Naive thymus-derived CD8-positive, alpha-beta T cell (primary cell): ENCODE measurements at regions of chr6 and their contacts with region 1.

Region 1: GRCh38 chr6:30616811-30617564 is at the start of gene PPP1R10:
- DNase-seq: peak; percentile 83 to 100 (median 99)
- ATAC-seq: peak; percentile 70 to 77
- H3K4me3 Mint-ChIP-seq: peak within 1 kb of the TSS; percentile 92 to 100 (median 99)
- H3K27ac Mint-ChIP-seq: peak within 1 kb of the TSS; percentile 99 to 100 (median 100)
- H3K4me1 Mint-ChIP-seq: peaks cover 18 to 61% (median 48%) of the 10 kb centered on the region in 4 donors
- H3K27me3 Mint-ChIP-seq: peaks cover 0 to 8% (median 0%) of the 10 kb centered on the region in 5 donors
- polyA plus RNA-seq, gene PPP1R10: 16.9 to 20.2 (median 19.8) TPM

Region 2: DNA sequence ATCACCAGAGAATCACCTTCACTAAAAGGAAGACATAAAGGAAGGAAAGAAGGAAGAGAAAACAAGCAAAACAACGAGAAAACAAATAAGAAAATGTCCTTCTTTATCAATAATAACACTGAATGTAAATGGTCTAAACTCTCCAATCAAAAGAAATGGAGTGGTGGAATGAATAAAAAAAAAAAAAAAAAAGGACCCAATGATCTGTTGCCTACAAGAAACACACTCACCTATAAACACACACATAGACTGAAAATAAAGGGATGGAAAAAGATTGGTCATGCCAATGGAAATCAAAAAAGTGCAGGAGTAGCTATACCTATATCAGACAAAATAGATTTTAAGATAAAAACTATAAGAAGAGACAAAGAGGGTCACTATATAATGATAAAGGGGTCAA is 157.8 kb before region 1 on chr6:
- POLR2A ChIA-PET with region 1: no interaction called
- DNase-seq: no peak
- ATAC-seq: no peak
- H3K4me3 Mint-ChIP-seq: no peak overlapping the region
- H3K27ac Mint-ChIP-seq: no peak overlapping the region
- H3K4me1 Mint-ChIP-seq: peaks cover 13 to 35% (median 22%) of the 10 kb centered on the region in 4 donors
- H3K27me3 Mint-ChIP-seq: peaks cover 67 to 94% (median 80%) of the 10 kb centered on the region in 5 donors

Region 3: GRCh38 chr6:30515932-30516753 is 100.8 kb before region 1 on chr6:
- POLR2A ChIA-PET with region 1: interaction called, 18 read pairs
- DNase-seq: peak; percentile 71 to 97 (median 91)
- ATAC-seq: peak; percentile 84 to 85
- H3K4me3 Mint-ChIP-seq: peak overlapping the region; percentile 70 to 94 (median 90)
- H3K27ac Mint-ChIP-seq: peak overlapping the region; percentile 96 to 100 (median 99)
- H3K4me1 Mint-ChIP-seq: peaks cover 18 to 80% (median 66%) of the 10 kb centered on the region in 4 donors
- H3K27me3 Mint-ChIP-seq: no peaks in the 10 kb centered on the region

Region 4: GRCh38 chr6:30571075-30571768 is 45.8 kb before region 1 on chr6 and contains the start of gene ABCF1:
- POLR2A ChIA-PET with region 1: interaction called, 39 read pairs
- DNase-seq: peak; percentile 98 to 100 (median 99)
- ATAC-seq: peak; percentile 94
- H3K4me3 Mint-ChIP-seq: peak within 1 kb of the TSS; percentile 91 to 100 (median 100)
- H3K27ac Mint-ChIP-seq: peak within 1 kb of the TSS; percentile 98 to 100 (median 99)
- H3K4me1 Mint-ChIP-seq: peaks cover 45 to 67% (median 62%) of the 10 kb centered on the region in 4 donors
- H3K27me3 Mint-ChIP-seq: no peaks in the 10 kb centered on the region
- polyA plus RNA-seq, gene ABCF1: 19.1 to 43.1 (median 30.5) TPM

Region 5: GRCh38 chr6:30646458-30647241 is 29.7 kb after region 1 on chr6 and contains the start of gene C6orf136:
- POLR2A ChIA-PET with region 1: interaction called, 15 read pairs
- DNase-seq: peak in 9 of 10 donors; percentile 88 to 96 (median 93)
- ATAC-seq: peak; percentile 79 to 80
- H3K4me3 Mint-ChIP-seq: peak within 1 kb of the TSS; percentile 80 to 93 (median 87)
- H3K27ac Mint-ChIP-seq: peak within 1 kb of the TSS; percentile 71 to 96 (median 93)
- H3K4me1 Mint-ChIP-seq: peaks cover 25 to 48% (median 33%) of the 10 kb centered on the region in 4 donors
- H3K27me3 Mint-ChIP-seq: no peaks in the 10 kb centered on the region
- polyA plus RNA-seq, gene C6orf136: 5.6 to 23.2 (median 13.7) TPM

Region 6: GRCh38 chr6:30717042-30717844 is 100.3 kb after region 1 on chr6 and contains the start of gene MDC1:
- POLR2A ChIA-PET with region 1: interaction called, 42 read pairs
- DNase-seq: peak; percentile 91 to 100 (median 98)
- ATAC-seq: peak; percentile 75 to 80
- H3K4me3 Mint-ChIP-seq: peak within 1 kb of the TSS; percentile 87 to 99 (median 97)
- H3K27ac Mint-ChIP-seq: peak within 1 kb of the TSS; percentile 97 to 100 (median 99)
- H3K4me1 Mint-ChIP-seq: peaks cover 34 to 59% (median 57%) of the 10 kb centered on the region in 4 donors
- H3K27me3 Mint-ChIP-seq: no peaks in the 10 kb centered on the region
- polyA plus RNA-seq, gene MDC1: 1.3 to 6.3 (median 2.8) TPM

Region 7: DNA sequence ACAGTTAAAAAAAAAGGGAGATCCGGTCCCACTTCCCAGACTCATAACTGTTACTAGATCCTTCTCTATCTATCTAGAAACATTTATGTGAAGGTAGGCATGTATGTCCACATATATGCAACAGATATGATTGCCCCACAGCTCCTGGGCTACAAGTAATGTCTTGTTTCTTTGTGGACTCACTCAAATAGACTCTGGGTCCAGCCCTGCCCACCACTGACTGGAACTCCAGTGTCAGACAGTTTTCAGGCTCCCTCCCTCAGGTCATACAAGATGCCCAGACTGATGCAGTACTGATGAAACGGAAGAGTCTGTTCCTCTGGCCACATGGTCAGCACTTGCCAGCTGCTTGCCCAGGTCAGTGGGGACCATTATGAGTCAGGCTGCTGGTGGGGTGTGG is 158.1 kb after region 1 on chr6:
- POLR2A ChIA-PET with region 1: no interaction called
- DNase-seq: no peak
- ATAC-seq: no peak
- H3K4me3 Mint-ChIP-seq: no peak overlapping the region
- H3K27ac Mint-ChIP-seq: peak overlapping the region in 2 of 10 donors; percentile 62 to 65
- H3K4me1 Mint-ChIP-seq: peaks cover 19 to 41% (median 34%) of the 10 kb centered on the region in 4 donors
- H3K27me3 Mint-ChIP-seq: no peaks in the 10 kb centered on the region

Region 8: DNA sequence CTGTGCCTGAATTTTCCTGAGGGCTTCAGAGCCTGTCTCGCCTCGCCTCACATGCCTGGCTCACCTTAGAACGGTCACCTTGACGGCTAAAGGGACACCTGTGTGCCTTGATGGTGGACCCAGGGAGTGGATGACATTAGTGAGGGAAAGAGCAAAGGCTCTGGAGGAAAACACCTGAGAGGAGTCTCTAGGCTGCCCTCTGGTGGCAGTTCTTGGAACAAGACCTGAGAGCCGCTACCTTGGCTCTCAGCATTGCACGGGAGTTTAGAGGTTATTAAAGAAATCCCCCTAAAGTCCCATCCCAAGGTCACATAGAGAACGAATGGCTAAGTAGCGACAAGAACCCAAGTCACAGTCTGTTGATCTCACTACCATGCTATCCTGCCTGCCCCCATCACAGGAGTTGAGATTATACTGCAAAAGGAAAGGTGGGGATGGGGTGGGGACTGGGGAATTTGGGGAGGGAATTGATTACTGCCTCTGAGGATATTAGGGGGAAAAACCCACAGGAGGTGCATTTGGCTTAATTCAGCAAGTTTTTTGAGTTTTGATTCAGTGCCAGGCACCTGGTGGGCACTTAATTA is 511.2 kb after region 1 on chr6:
- POLR2A ChIA-PET with region 1: no interaction called
- DNase-seq: peak; percentile 38 to 81 (median 70)
- ATAC-seq: peak; percentile 79 to 86
- H3K4me3 Mint-ChIP-seq: no peak overlapping the region
- H3K27ac Mint-ChIP-seq: peak overlapping the region in 5 of 10 donors; percentile 1 to 77 (median 44)
- H3K4me1 Mint-ChIP-seq: peaks cover 5 to 10% (median 7%) of the 10 kb centered on the region in 4 donors
- H3K27me3 Mint-ChIP-seq: peaks cover 0 to 5% (median 1%) of the 10 kb centered on the region in 5 donors

Region 9: DNA sequence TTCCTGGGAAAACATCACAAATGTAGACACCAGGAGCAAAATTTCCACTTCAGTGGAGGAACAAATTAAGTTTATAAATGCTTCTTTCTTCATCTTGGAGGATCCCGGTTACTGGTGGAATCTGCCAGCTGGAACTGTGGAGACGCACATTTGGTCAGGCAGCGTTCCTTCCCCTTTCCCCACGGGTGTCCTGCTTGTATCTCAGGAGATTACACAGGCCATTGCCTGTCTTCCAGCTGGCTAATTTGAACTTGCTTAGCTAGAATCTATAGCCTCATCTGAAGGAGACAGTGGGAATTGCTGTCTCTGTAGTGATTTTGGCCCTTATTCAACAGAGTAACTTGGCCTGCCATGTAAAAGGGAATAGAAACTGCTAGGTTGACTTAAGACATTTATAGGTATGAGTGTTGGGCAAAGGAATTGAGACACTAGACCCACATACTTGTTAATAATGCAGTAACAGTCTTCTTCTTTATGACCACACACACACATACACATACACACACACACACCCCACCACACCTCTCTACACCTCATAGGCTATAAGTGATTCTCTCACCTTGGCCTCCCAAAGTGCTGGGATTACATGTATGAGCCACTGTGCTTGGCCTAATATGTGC is 1720.3 kb after region 1 on chr6:
- POLR2A ChIA-PET with region 1: no interaction called
- DNase-seq: no peak
- ATAC-seq: no peak
- H3K4me3 Mint-ChIP-seq: no peak overlapping the region
- H3K27ac Mint-ChIP-seq: no peak overlapping the region
- H3K4me1 Mint-ChIP-seq: no peaks in the 10 kb centered on the region
- H3K27me3 Mint-ChIP-seq: peaks cover 0 to 12% (median 2%) of the 10 kb centered on the region in 5 donors